Endothelial cell of umbilical vein (primary cell): ENCODE measurements at regions of chr19 and their contacts with region 1.

Region 1: GRCh38 chr19:13588957-13589833 is 82.9 kb upstream of the CACNA1A start:
- DNase-seq: peak; percentile 55
- H3K4me3 ChIP-seq: no peak overlapping the region
- H3K27ac ChIP-seq: no peak overlapping the region
- H3K4me1 ChIP-seq: no peaks in the 10 kb centered on the region
- H3K27me3 ChIP-seq: no peaks in the 10 kb centered on the region
- CTCF ChIP-seq: peak; percentile 96 to 99
- POLR2A ChIP-seq: no peak

Region 2: GRCh38 chr19:13277104-13277809 is 311.9 kb before region 1 on chr19:
- CTCF ChIA-PET with region 1: interaction called, 135 read pairs
- POLR2A ChIA-PET with region 1: no interaction called
- dilution Hi-C with region 1: no loop called
- intact Hi-C with region 1: loop called (anchors 1 kb)
- DNase-seq: peak; percentile 78
- H3K4me3 ChIP-seq: no peak overlapping the region
- H3K27ac ChIP-seq: peak overlapping the region; percentile 4
- H3K4me1 ChIP-seq: peaks cover 5% of the 10 kb centered on the region
- H3K27me3 ChIP-seq: no peaks in the 10 kb centered on the region
- CTCF ChIP-seq: peak; percentile 41 to 61
- POLR2A ChIP-seq: no peak

Region 3: GRCh38 chr19:13366529-13367143 is 222.6 kb before region 1 on chr19:
- CTCF ChIA-PET with region 1: interaction called, 11 read pairs
- POLR2A ChIA-PET with region 1: no interaction called
- dilution Hi-C with region 1: no loop called
- intact Hi-C with region 1: loop called (anchors 1 kb)
- DNase-seq: peak; percentile 28
- H3K4me3 ChIP-seq: no peak overlapping the region
- H3K27ac ChIP-seq: no peak overlapping the region
- H3K4me1 ChIP-seq: no peaks in the 10 kb centered on the region
- H3K27me3 ChIP-seq: no peaks in the 10 kb centered on the region
- CTCF ChIP-seq: peak; percentile 46 to 48
- POLR2A ChIP-seq: no peak

Region 4: DNA sequence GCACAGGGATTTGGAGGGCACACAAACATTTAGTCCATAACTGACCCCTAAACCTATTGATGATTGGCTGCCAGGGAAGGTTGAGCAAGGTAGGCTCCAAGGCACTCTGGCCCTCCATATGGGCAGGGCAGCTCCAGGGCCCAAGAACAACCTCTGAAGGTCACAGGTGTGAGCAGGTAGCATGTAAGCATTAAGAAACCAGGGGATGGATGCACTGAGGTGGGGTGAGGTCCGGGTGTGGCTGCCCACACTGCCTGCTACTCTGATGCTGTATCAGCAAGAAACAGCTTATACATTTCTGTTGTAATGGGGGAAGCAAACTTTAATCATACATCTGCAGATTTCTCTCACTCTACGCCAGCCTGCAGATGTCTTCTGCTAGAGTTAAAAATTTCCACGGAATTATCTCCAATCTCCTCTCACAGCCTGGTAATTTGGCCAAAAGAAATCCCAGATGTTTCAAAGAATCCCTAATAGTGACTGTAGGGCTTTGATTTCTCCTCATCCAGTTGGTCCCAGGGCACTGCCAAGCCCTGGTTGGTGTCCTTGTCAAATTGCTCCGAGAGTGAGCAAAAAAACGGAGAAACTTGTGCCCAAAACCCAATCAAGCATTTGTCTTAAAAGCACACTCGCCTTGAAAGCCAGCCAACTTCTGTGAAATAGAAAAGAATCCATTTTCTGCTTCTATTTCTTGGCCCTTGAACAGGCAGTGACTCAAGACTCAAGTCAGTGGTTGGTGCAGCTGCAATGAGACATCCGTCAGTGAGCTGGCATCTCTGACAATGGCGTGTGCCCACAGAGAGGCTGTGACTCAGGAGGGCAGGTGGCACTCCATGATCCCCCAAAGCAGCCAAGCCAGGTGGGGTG is 102.6 kb after region 1 on chr19:
- CTCF ChIA-PET with region 1: no interaction called
- POLR2A ChIA-PET with region 1: no interaction called
- dilution Hi-C with region 1: no loop called
- intact Hi-C with region 1: no loop called
- DNase-seq: no peak
- H3K4me3 ChIP-seq: no peak overlapping the region
- H3K27ac ChIP-seq: no peak overlapping the region
- H3K4me1 ChIP-seq: no peaks in the 10 kb centered on the region
- H3K27me3 ChIP-seq: no peaks in the 10 kb centered on the region
- CTCF ChIP-seq: no peak
- POLR2A ChIP-seq: no peak